ENCODE measurements at regions of chr12 and their contacts with region 1.

Region 1: GRCh38 chr12:51823875-51824565 is 24.5 kb downstream of the FIGNL2 start:
- DNase-seq: peak; percentile 55
- ATAC-seq: no peak
- H3K4me3 Mint-ChIP-seq: no peak overlapping the region
- H3K27ac Mint-ChIP-seq: peak overlapping the region; percentile 13
- H3K4me1 Mint-ChIP-seq: peaks cover 38% of the 10 kb centered on the region
- H3K27me3 Mint-ChIP-seq: no peaks in the 10 kb centered on the region

Region 2: DNA sequence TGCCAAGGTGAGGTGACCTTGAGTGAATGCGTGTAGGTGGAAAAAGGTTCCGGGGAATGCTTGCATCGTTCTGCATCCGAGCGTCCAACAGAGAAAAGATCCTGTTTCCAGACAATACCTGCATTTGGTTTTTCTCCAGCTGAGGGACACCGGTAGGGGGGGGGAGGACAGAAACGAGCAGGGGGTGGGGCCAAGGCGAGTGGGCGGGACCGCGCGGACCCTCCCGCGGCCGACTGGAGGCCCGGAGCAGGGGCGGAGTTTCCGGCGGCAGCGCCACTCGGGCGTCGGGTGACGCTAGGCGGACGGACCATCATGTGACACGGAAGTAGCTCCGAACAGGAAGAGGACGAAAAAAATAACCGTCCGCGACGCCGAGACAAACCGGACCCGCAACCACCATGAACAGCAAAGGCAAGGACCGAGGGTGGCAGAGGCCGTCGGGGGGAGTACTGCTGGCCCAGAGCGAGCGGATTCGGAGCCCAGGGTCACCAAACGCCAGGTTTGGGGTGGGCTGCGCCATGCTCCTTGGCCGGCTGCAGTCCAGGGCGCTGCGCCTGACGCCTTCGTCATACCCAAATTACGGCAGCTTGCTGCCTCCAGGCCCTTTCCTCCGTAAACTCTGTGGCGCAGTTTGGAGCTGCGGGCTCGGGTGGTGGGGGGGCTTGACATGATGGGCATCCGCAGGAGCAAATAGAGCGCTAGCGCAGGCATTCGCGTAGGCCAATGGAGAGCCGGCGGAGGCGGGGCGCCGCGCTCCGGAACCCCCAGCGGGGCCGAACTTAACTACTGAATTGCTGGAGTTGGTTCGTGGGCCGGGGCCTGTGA is 585.3 kb before region 1 on chr12 and contains the start of gene DAZAP2:
- CTCF ChIA-PET with region 1: no interaction called
- POLR2A ChIA-PET with region 1: no interaction called
- intact Hi-C with region 1: loop called in 1 of 2 experiments (anchors 10 kb)
- DNase-seq: peak; percentile 98
- ATAC-seq: peak; percentile 92
- H3K4me3 Mint-ChIP-seq: peak within 1 kb of the TSS; percentile 87
- H3K27ac Mint-ChIP-seq: peak within 1 kb of the TSS; percentile 100
- H3K4me1 Mint-ChIP-seq: peaks cover 36% of the 10 kb centered on the region
- H3K27me3 Mint-ChIP-seq: no peaks in the 10 kb centered on the region
- total RNA-seq, gene DAZAP2: 94.8 to 95.2 TPM

Region 3: GRCh38 chr12:51391283-51392162 is 432.5 kb before region 1 on chr12 and contains the start of gene GALNT6:
- CTCF ChIA-PET with region 1: interaction called, 3 read pairs
- POLR2A ChIA-PET with region 1: no interaction called
- intact Hi-C with region 1: loop called in 1 of 2 experiments (anchors 10 kb)
- DNase-seq: peak; percentile 78
- ATAC-seq: peak; percentile 43
- H3K4me3 Mint-ChIP-seq: peak within 1 kb of the TSS; percentile 85
- H3K27ac Mint-ChIP-seq: peak within 1 kb of the TSS; percentile 67
- H3K4me1 Mint-ChIP-seq: peaks cover 79% of the 10 kb centered on the region
- H3K27me3 Mint-ChIP-seq: no peaks in the 10 kb centered on the region
- total RNA-seq, gene GALNT6: 11.7 to 12.0 TPM

Region 4: GRCh38 chr12:51531978-51532497 is 292.0 kb before region 1 on chr12:
- CTCF ChIA-PET with region 1: interaction called, 3 read pairs
- POLR2A ChIA-PET with region 1: no interaction called
- intact Hi-C with region 1: loop called in 1 of 2 experiments (anchors 5 kb)
- DNase-seq: peak; percentile 85
- ATAC-seq: peak; percentile 94
- H3K4me3 Mint-ChIP-seq: no peak overlapping the region
- H3K27ac Mint-ChIP-seq: no peak overlapping the region
- H3K4me1 Mint-ChIP-seq: peaks cover 6% of the 10 kb centered on the region
- H3K27me3 Mint-ChIP-seq: peaks cover 2% of the 10 kb centered on the region

Region 5: GRCh38 chr12:51871126-51871525 is 47.1 kb after region 1 on chr12:
- CTCF ChIA-PET with region 1: interaction called, 15 read pairs
- POLR2A ChIA-PET with region 1: no interaction called
- intact Hi-C with region 1: loop called (anchors 2 to 5 kb)
- DNase-seq: no peak
- ATAC-seq: no peak
- H3K4me3 Mint-ChIP-seq: no peak overlapping the region
- H3K27ac Mint-ChIP-seq: no peak overlapping the region
- H3K4me1 Mint-ChIP-seq: peaks cover 11% of the 10 kb centered on the region
- H3K27me3 Mint-ChIP-seq: peaks cover 31% of the 10 kb centered on the region

Region 6: GRCh38 chr12:51951199-51951842 is 127.3 kb after region 1 on chr12 and contains the start of gene ACVR1B:
- CTCF ChIA-PET with region 1: interaction called, 4 read pairs
- POLR2A ChIA-PET with region 1: no interaction called
- intact Hi-C with region 1: loop called in 1 of 2 experiments (anchors 2 kb)
- DNase-seq: peak; percentile 94
- ATAC-seq: peak; percentile 98
- H3K4me3 Mint-ChIP-seq: peak within 1 kb of the TSS; percentile 90
- H3K27ac Mint-ChIP-seq: peak within 1 kb of the TSS; percentile 76
- H3K4me1 Mint-ChIP-seq: peaks cover 40% of the 10 kb centered on the region
- H3K27me3 Mint-ChIP-seq: peaks cover 10% of the 10 kb centered on the region
- total RNA-seq, gene ACVR1B: 10.1 to 12.7 TPM

Region 7: DNA sequence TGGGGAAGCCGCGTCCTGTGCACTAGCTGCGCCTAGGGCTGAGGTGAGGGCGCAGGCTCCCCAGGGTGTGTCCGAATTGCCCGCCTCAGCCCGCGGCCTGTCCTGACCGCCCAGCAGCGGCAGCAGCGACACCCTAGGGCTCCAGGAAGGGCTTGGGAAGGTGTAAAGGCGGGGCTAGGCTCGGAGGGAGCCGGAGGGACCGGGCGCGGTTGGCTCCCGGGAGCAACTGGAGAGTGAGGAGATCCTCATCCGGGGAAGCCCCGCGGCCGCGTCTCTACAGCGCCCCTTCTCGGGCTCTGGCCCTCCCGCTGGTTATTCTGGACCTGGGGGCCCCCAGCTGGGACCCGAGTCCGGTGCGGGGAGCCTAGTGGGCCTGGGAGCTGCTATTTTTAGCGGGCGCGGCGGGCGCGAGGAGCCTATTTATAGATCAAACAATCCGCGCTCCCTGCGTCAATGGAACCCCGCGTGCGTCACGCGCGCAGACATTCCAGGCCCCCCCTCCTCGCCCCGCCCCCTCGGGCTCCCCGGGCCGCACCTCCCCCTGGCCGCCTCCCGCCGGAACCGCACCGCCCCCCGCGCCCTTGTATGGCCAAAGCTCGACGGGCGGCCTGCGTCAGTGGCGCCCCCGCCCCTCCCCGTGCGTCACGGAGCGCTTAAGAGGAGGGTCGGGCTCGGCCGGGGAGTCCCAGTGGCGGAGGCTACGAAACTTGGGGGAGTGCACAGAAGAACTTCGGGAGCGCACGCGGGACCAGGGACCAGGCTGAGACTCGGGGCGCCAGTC is 226.9 kb after region 1 on chr12 and contains the start of gene NR4A1:
- CTCF ChIA-PET with region 1: no interaction called
- POLR2A ChIA-PET with region 1: no interaction called
- intact Hi-C with region 1: no loop called
- DNase-seq: peak; percentile 100
- ATAC-seq: peak; percentile 88
- H3K4me3 Mint-ChIP-seq: peak within 1 kb of the TSS; percentile 92
- H3K27ac Mint-ChIP-seq: peak within 1 kb of the TSS; percentile 91
- H3K4me1 Mint-ChIP-seq: peaks cover 38% of the 10 kb centered on the region
- H3K27me3 Mint-ChIP-seq: no peaks in the 10 kb centered on the region
- total RNA-seq, gene NR4A1: 69.4 to 72.8 TPM

Region 8: GRCh38 chr12:52069327-52070184 is 245.5 kb after region 1 on chr12 and contains the start of gene ATG101:
- CTCF ChIA-PET with region 1: interaction called, 3 read pairs
- POLR2A ChIA-PET with region 1: no interaction called
- intact Hi-C with region 1: loop called in 1 of 2 experiments (anchors 10 kb)
- DNase-seq: peak; percentile 92
- ATAC-seq: peak; percentile 95
- H3K4me3 Mint-ChIP-seq: peak within 1 kb of the TSS; percentile 99
- H3K27ac Mint-ChIP-seq: peak within 1 kb of the TSS; percentile 99
- H3K4me1 Mint-ChIP-seq: peaks cover 56% of the 10 kb centered on the region
- H3K27me3 Mint-ChIP-seq: no peaks in the 10 kb centered on the region
- total RNA-seq, gene ATG101: 24.0 to 30.7 TPM

Region 9: GRCh38 chr12:52230327-52231291 is 406.6 kb after region 1 on chr12:
- CTCF ChIA-PET with region 1: no interaction called
- POLR2A ChIA-PET with region 1: no interaction called
- intact Hi-C with region 1: no loop called
- DNase-seq: no peak
- ATAC-seq: no peak
- H3K4me3 Mint-ChIP-seq: no peak overlapping the region
- H3K27ac Mint-ChIP-seq: no peak overlapping the region
- H3K4me1 Mint-ChIP-seq: no peaks in the 10 kb centered on the region
- H3K27me3 Mint-ChIP-seq: peaks cover 54% of the 10 kb centered on the region

Measured in activated CD4-positive, alpha-beta T cell treated with anti-CD3 and anti-CD28 coated beads for 36 hours (primary cell).